ENCODE measurements at regions of chr21 and their contacts with region 1.

Region 1: DNA sequence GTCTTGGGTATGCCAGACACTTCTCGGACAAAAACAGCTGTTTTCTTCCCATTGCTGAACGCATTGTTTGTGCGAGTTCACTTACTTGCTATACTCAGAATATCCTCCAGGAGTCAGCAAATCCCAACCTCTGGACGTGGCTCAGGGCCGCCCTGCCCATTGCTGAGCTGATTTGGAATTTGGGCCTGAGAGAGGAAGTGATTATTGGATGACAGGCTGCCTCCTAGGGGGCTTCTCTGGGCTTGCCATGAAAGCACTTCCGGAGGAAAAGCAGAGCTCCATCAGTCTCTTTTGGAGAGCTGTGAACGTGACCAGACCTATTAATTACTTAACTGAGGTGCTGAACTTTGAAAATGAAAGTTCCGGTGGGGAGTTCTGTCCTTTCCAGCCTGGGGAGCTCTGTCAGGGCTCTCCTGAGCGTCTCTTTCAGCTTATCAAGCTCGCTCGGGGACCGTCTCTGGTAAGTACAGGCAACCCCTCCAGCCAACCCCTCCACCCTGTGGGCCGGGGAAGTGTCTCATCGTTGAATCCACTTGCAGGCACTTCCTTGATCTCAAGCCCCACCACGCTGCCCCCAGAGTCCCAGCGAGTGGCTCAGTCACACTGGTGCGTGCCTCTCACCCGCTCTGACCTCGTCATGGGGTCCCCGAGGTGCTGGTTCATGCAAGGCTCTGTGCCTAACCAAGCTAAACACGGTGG is 76.9 kb downstream of the CLIC6 start:
- DNase-seq: peak; percentile 74
- H3K4me3 ChIP-seq: no peak overlapping the region
- H3K27ac ChIP-seq: no peak overlapping the region
- H3K4me1 ChIP-seq: no peaks in the 10 kb centered on the region
- H3K27me3 ChIP-seq: peaks cover 11 to 23% of the 10 kb centered on the region in 2 experiments
- CTCF ChIP-seq: peak; percentile 80 to 90
- POLR2A ChIP-seq: no peak

Region 2: GRCh38 chr21:34732388-34732821 is 13.3 kb before region 1 on chr21:
- CTCF ChIA-PET with region 1: interaction called, 14 read pairs
- POLR2A ChIA-PET with region 1: no interaction called
- dilution Hi-C with region 1: no loop called
- intact Hi-C with region 1: no loop called
- DNase-seq: no peak
- H3K4me3 ChIP-seq: no peak overlapping the region
- H3K27ac ChIP-seq: no peak overlapping the region
- H3K4me1 ChIP-seq: no peaks in the 10 kb centered on the region
- H3K27me3 ChIP-seq: peaks cover 17 to 44% of the 10 kb centered on the region in 2 experiments
- CTCF ChIP-seq: no peak
- POLR2A ChIP-seq: no peak

Region 3: GRCh38 chr21:34845521-34846451 is 100.1 kb after region 1 on chr21:
- CTCF ChIA-PET with region 1: interaction called, 24 read pairs
- POLR2A ChIA-PET with region 1: no interaction called
- dilution Hi-C with region 1: no loop called
- intact Hi-C with region 1: no loop called
- DNase-seq: peak; percentile 80
- H3K4me3 ChIP-seq: no peak overlapping the region
- H3K27ac ChIP-seq: no peak overlapping the region
- H3K4me1 ChIP-seq: peaks cover 17% of the 10 kb centered on the region
- H3K27me3 ChIP-seq: no peaks in the 10 kb centered on the region
- CTCF ChIP-seq: no peak
- POLR2A ChIP-seq: no peak

Region 4: DNA sequence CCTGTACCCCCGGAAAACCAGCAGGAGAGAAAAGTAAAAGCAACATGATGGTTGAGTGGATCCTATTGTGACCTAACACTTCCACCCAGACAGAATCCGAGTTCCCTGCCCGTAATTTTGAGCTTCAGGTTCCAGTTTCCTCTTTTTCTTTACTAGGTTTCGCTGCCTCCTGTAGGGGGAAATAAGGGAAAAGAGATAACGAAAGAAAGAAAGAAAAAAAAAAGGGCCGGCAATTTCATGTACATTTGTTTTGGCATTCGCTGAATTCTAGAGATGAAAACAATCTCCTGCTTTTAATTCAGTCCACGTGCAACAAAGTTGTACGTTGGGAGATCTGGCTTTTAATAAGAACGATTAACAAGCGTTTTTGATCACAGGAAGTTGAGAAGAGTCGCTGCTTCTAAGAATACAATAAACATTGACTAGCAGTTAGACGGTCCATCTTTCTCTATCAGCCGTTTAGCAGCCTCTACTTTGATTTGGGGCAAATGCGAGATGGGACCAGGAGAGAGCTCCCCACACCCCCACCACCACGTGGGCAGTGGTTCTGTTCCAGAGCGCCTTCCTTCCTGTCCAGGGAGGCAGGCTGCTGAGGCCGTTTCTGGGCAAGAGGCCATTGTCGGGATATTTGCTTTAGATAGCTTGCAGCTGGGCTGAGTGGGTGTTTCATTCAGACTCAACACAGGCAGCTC is 459.3 kb after region 1 on chr21:
- CTCF ChIA-PET with region 1: interaction called, 12 read pairs
- POLR2A ChIA-PET with region 1: no interaction called
- dilution Hi-C with region 1: no loop called
- intact Hi-C with region 1: no loop called
- DNase-seq: peak; percentile 96
- H3K4me3 ChIP-seq: peak overlapping the region in 1 of 3 experiments; percentile 24
- H3K27ac ChIP-seq: peak overlapping the region; percentile 53
- H3K4me1 ChIP-seq: peaks cover 35% of the 10 kb centered on the region
- H3K27me3 ChIP-seq: no peaks in the 10 kb centered on the region
- CTCF ChIP-seq: no peak
- POLR2A ChIP-seq: peak; percentile 42

Region 5: GRCh38 chr21:35333831-35334618 is 588.3 kb after region 1 on chr21:
- CTCF ChIA-PET with region 1: no interaction called
- POLR2A ChIA-PET with region 1: no interaction called
- dilution Hi-C with region 1: no loop called
- intact Hi-C with region 1: no loop called
- DNase-seq: no peak
- H3K4me3 ChIP-seq: no peak overlapping the region
- H3K27ac ChIP-seq: no peak overlapping the region
- H3K4me1 ChIP-seq: no peaks in the 10 kb centered on the region
- H3K27me3 ChIP-seq: no peaks in the 10 kb centered on the region
- CTCF ChIP-seq: no peak
- POLR2A ChIP-seq: no peak

Region 6: GRCh38 chr21:35840197-35840799 is 1094.6 kb after region 1 on chr21:
- CTCF ChIA-PET with region 1: interaction called, 168 read pairs
- POLR2A ChIA-PET with region 1: interaction called, 3 read pairs
- dilution Hi-C with region 1: no loop called
- intact Hi-C with region 1: loop called (anchors 1 kb)
- DNase-seq: peak; percentile 78
- H3K4me3 ChIP-seq: no peak overlapping the region
- H3K27ac ChIP-seq: no peak overlapping the region
- H3K4me1 ChIP-seq: no peaks in the 10 kb centered on the region
- H3K27me3 ChIP-seq: peaks cover 0 to 2% of the 10 kb centered on the region in 2 experiments
- CTCF ChIP-seq: peak; percentile 65 to 71
- POLR2A ChIP-seq: no peak